T-cell (primary cell): ENCODE measurements at regions of chr7 and their contacts with region 1.

Region 1: DNA sequence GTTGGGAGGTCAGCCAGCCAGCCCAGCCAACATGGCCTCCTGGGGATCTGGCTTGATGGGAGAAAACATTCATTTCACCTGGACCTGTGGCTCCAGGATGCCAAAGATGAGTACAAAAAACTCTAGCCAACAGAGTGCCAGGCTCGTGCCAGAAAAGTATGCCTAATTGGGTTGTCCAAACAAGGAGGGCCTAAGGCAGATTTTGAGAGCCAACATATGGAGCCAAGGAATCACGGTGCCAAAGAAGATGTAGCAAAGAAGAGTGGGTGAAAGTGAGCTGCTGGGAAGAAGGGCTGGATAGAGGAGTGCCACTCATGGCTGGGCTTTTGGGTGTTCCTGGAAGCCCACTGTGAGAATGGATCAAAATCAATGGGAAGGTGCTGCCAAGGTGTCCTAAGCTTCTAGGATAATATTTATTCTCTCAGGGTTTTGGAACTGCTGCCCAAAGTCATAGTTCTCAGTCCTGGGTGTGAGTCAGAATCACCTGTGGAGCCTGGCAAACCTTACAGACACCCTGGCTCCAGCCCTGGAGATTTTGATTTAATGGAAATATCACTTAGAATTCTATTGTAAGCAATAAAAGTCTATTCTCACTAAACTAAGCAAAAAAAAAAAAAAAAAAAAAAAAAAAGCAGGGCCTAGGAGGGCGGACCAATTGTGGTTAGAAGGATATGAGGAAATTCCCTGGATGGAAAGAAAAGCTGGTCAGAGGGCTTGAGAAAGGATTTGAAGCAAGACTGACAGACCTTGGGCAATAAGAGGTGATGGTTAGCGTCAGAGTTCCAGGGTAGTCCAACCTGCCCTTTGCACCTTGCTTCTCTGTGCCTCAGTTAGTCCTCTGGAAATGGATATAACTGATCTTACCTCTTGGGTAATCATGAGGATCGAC is 182.2 kb upstream of the PRR15 start:
- DNase-seq: no peak
- ATAC-seq: no peak
- H3K4me3 ChIP-seq: no peak overlapping the region
- H3K4me3 Mint-ChIP-seq: no peak overlapping the region
- H3K27ac ChIP-seq: no peak overlapping the region
- H3K27ac Mint-ChIP-seq: no peak overlapping the region
- H3K4me1 ChIP-seq: no peaks in the 10 kb centered on the region
- H3K4me1 Mint-ChIP-seq: no peaks in the 10 kb centered on the region
- H3K27me3 ChIP-seq: no peaks in the 10 kb centered on the region
- H3K27me3 Mint-ChIP-seq: peaks cover 0 to 7% of the 10 kb centered on the region in 2 donors

Region 2: GRCh38 chr7:29362380-29362779 is 19.1 kb before region 1 on chr7:
- CTCF ChIA-PET with region 1: interaction called in 1 of 2 experiments, 10 read pairs
- POLR2A ChIA-PET with region 1: no interaction called
- DNase-seq: no peak
- ATAC-seq: no peak
- H3K4me3 ChIP-seq: no peak overlapping the region
- H3K4me3 Mint-ChIP-seq: no peak overlapping the region
- H3K27ac ChIP-seq: no peak overlapping the region
- H3K27ac Mint-ChIP-seq: no peak overlapping the region
- H3K4me1 ChIP-seq: no peaks in the 10 kb centered on the region
- H3K4me1 Mint-ChIP-seq: no peaks in the 10 kb centered on the region
- H3K27me3 ChIP-seq: no peaks in the 10 kb centered on the region
- H3K27me3 Mint-ChIP-seq: no peaks in the 10 kb centered on the region

Region 3: DNA sequence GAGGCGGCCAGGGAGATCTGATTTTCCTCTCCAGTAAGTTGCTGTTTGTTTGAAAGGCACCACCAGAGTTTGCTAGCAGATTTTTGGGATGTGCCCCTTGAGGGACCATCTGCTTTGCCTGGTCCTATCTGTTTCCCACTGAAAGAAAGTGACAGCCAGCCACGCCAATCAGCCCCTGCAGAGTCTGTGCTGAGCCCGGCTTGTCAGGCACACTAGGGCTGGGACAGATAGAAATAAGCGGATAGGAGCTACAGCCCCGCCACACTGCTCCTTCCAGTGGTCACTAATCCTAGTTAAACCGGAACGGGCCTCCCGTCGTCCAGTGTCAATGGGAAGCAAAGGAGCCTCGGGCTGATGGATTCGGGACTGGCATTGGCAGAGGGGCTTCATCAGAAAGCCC is 20.3 kb after region 1 on chr7:
- CTCF ChIA-PET with region 1: interaction called in 1 of 2 experiments, 15 read pairs
- POLR2A ChIA-PET with region 1: no interaction called
- DNase-seq: no peak
- ATAC-seq: no peak
- H3K4me3 ChIP-seq: no peak overlapping the region
- H3K4me3 Mint-ChIP-seq: no peak overlapping the region
- H3K27ac ChIP-seq: no peak overlapping the region
- H3K27ac Mint-ChIP-seq: no peak overlapping the region
- H3K4me1 ChIP-seq: no peaks in the 10 kb centered on the region
- H3K4me1 Mint-ChIP-seq: peaks cover 0 to 6% (median 2%) of the 10 kb centered on the region in 3 donors
- H3K27me3 ChIP-seq: no peaks in the 10 kb centered on the region
- H3K27me3 Mint-ChIP-seq: peaks cover 0 to 1% of the 10 kb centered on the region in 2 donors

Region 4: DNA sequence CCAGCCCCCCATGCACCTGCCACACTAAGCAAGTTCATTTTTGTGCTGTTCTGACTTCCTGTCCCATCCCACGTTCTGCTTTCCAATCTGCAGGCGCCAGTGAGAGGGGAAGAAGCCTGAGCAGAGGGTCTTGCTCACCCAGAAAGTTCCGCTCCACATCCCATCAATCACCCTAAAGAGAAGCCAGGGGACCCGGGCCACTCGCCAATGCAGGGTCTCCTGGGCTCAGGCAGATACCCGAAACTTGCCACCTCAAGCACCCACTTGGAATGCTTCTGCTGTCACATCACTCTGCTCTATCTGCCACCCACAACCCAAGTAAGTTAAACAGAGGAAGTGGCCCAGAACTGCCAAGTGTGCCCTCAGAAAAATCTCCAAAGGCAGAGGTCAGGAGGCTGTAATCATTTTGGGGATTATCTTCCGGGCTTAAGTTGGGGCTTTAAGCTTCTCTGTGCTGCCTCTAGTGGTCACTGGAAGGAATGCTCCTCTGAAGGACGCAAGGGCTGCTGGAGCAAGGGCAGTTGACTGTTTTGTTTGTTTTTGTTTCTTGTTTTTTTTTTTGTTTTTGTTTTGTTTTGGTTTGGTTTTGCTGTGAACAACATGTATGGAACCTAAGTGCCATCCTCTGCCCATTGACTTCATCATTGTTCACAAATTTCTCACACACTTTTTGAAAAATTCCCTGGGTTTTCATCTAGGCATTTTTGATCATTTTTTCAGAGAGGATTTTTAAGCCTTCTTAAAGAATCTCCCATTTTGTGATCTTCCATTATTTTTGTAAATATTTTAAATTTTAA is 207.6 kb after region 1 on chr7:
- CTCF ChIA-PET with region 1: no interaction called
- POLR2A ChIA-PET with region 1: no interaction called
- DNase-seq: peak in 9 of 35 experiments; percentile 2 to 43 (median 11)
- ATAC-seq: no peak
- H3K4me3 ChIP-seq: peak overlapping the region in 1 of 2 donors; percentile 36
- H3K4me3 Mint-ChIP-seq: peak overlapping the region in 1 of 3 donors; percentile 69
- H3K27ac ChIP-seq: no peak overlapping the region
- H3K27ac Mint-ChIP-seq: no peak overlapping the region
- H3K4me1 ChIP-seq: peaks cover 0 to 5% of the 10 kb centered on the region in 2 experiments
- H3K4me1 Mint-ChIP-seq: peaks cover 5 to 11% (median 6%) of the 10 kb centered on the region in 3 donors
- H3K27me3 ChIP-seq: peaks cover 0 to 6% of the 10 kb centered on the region in 2 experiments
- H3K27me3 Mint-ChIP-seq: peaks cover 3 to 7% of the 10 kb centered on the region in 2 donors